Gastrocnemius medialis (tissue), 4 donors: ENCODE measurements at regions of chr17 and their contacts with region 1.

Region 1: DNA sequence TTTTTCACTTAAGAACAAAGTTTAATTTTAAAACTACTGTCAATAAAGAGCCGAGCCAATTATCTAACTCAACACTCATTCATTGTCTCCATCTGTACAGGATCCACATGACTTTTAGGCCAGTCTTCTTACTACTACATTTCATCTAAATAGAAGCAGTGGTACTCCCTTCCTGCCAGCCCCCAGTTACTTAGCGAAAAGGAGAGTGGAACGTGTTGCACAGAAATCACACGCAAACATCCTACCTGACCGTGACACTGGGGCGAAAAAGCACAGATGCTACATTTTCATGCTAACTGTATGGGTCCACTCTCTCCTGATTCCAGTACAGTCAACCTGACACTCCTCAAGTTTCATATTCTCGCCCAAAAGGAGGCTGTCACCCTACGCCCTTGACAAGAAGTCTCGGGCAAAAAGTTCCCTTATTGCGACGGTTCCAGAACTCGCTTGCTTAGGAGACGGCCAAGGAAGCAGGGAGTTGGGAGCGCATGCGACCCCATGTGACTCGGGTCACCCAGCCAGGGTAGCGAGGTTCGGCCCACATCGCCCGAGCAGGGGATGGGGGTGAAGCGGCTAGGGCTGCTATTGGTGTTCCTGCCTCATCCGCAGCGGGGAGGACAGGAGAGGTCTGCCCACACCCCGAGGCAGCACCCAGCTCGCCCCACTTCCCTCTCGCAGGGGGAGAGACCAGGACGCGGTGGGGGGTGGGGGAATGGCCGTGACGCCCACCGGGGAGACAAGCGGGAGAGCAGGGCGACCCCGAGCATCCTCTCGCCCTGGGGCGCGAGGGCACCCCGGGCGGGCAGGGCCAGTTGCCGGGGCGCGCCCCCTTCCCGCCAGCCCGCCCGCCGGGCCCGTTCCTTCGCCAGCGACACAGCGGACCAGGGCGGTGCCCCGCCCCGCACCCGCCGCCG is 935 bp downstream of the GNA13 start:
- DNase-seq: peak; percentile 79 to 84
- ATAC-seq: peak; percentile 60 to 72
- H3K4me3 ChIP-seq: peak overlapping the region; percentile 72 to 96 (median 90)
- H3K27ac ChIP-seq: peak overlapping the region; percentile 98 to 100 (median 99)
- H3K4me1 ChIP-seq: peaks cover 35 to 38% of the 10 kb centered on the region in 2 donors
- H3K27me3 ChIP-seq: no peaks in the 10 kb centered on the region
- CTCF ChIP-seq: no peak
- POLR2A ChIP-seq: peak; percentile 88 to 89

Region 2: DNA sequence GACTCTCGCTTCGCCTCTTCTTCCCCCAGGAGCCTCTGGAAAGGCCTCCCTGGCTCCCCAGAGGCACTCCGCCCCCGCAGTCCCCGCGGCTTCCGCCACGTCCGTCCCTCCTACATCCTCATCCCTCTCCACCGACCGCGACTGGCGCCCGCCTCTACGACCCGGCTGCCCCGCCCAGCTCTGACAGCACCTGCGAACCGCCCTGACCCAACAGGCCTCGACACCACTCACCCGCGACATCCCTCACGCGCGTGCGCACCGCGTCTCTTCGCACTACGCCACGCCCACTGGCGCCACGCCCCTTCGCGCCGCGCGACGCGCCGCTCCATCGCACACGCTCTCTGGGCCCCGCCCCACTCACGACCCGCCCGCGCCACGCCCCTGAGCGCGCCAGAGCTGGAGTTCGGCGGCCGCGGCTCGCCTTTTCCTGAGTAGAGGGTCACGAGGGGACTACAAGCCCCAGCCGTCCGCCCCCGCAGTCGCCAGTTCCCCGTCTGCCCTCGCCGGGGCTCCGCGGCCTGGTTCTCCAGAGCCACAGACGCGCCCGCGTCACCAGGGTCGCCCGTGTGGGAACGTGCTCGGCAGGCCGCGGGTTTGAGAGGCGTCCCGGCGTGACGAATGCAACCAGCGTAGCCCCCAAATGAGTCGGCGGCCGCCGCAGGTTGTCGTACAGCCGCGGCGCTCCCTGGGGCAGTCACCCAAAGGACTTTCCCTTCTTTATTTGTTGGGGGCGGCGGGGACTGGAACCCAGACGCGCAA is 80.1 kb before region 1 on chr17:
- in situ Hi-C with region 1: loop called in 3 of 4 experiments (anchors 5 to 10 kb)
- intact Hi-C with region 1: loop called (anchors 1 kb)
- DNase-seq: peak; percentile 89 to 92
- ATAC-seq: peak; percentile 90 to 94
- H3K4me3 ChIP-seq: peak overlapping the region; percentile 70 to 95 (median 84)
- H3K27ac ChIP-seq: peak overlapping the region; percentile 94 to 100 (median 98)
- H3K4me1 ChIP-seq: peaks cover 13% of the 10 kb centered on the region in 2 donors
- H3K27me3 ChIP-seq: no peaks in the 10 kb centered on the region
- CTCF ChIP-seq: peak in 1 of 5 experiments; percentile 3
- POLR2A ChIP-seq: peak; percentile 93 to 97

Region 3: DNA sequence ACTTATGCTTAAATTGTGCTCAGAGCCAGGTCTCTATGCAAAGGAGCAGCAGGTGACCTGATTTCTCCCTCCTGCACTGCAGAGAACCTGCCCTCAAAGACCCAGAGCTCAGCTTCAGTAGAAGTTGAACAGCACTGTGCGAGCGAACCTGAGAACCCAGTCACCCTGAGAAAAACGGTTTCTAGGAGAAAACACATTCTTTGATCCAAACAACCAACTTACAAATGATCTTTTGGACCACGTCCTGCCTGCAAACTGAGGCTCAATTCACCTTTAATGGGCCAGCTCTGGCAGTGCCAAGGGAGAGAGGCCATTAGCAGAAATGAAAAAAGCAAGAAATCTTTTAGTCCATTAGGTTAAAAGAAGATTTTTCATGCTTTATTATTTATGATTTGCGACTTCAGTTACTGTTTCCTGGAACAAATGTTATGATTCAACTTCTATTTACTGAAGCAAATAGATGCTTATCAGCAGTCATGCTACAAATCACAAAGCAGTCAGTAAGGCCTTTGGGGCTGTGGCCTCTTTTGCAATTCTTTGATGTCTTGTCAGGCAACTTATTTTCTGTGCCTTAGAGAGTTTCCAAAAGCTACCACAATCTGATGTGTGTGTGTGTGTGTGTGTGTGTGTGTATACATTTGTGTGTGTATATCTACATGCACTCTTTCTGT is 70.6 kb before region 1 on chr17:
- in situ Hi-C with region 1: loop called in 1 of 4 experiments (anchors 5 kb)
- intact Hi-C with region 1: no loop called
- DNase-seq: no peak
- ATAC-seq: no peak
- H3K4me3 ChIP-seq: no peak overlapping the region
- H3K27ac ChIP-seq: peak overlapping the region; percentile 86 to 98 (median 92)
- H3K4me1 ChIP-seq: peaks cover 22 to 25% of the 10 kb centered on the region in 2 donors
- H3K27me3 ChIP-seq: no peaks in the 10 kb centered on the region
- CTCF ChIP-seq: no peak
- POLR2A ChIP-seq: no peak